A549 (cell line): ENCODE measurements at regions of chr17 and their contacts with region 1.

Region 1: GRCh38 chr17:28252436-28252835 is 66.6 kb upstream of the TMEM97 start:
- DNase-seq: no peak
- ATAC-seq: no peak
- H3K4me3 ChIP-seq: no peak overlapping the region
- H3K27ac ChIP-seq: 0 out of 6 replicates have a peak overlapping the region, but pooled peaks of 1 of the 2 experiments have one; percentile 16
- H3K4me1 ChIP-seq: peaks cover 15% of the 10 kb centered on the region
- CTCF ChIP-seq: no peak
- EP300 ChIP-seq: no peak
- POLR2A ChIP-seq: no peak
- RAD21 ChIP-seq: no peak

Region 2: GRCh38 chr17:28227316-28228125 is 24.9 kb before region 1 on chr17:
- CTCF ChIA-PET with region 1: interaction called, 338 read pairs
- POLR2A ChIA-PET with region 1: no interaction called
- DNase-seq: peak; percentile 93 to 94
- ATAC-seq: peak; percentile 88 to 95
- H3K4me3 ChIP-seq: peak overlapping the region; percentile 58
- H3K27ac ChIP-seq: peak overlapping the region; percentile 83 to 84
- H3K4me1 ChIP-seq: peaks cover 14% of the 10 kb centered on the region; the same call in 2 of the 3 replicates
- CTCF ChIP-seq: no peak
- EP300 ChIP-seq: no peak
- POLR2A ChIP-seq: peak; percentile 68
- RAD21 ChIP-seq: no peak; a peak in 1 of 5 replicates

Region 3: GRCh38 chr17:28280826-28281225 is 28.4 kb after region 1 on chr17:
- CTCF ChIA-PET with region 1: interaction called, 28 read pairs
- POLR2A ChIA-PET with region 1: no interaction called
- DNase-seq: no peak
- ATAC-seq: no peak
- H3K4me3 ChIP-seq: no peak overlapping the region
- H3K27ac ChIP-seq: peak overlapping the region in 1 of 2 experiments; percentile 63; a peak in 4 of 6 replicates
- H3K4me1 ChIP-seq: peaks cover 20% of the 10 kb centered on the region
- CTCF ChIP-seq: no peak
- EP300 ChIP-seq: no peak
- POLR2A ChIP-seq: no peak
- RAD21 ChIP-seq: no peak

Region 4: GRCh38 chr17:28318759-28319660 is 66.6 kb after region 1 on chr17 and contains the start of gene TMEM97:
- CTCF ChIA-PET with region 1: interaction called, 27 read pairs
- POLR2A ChIA-PET with region 1: interaction called, 6 read pairs
- DNase-seq: peak; percentile 98
- ATAC-seq: peak; percentile 97 to 99
- H3K4me3 ChIP-seq: peak within 1 kb of the TSS; percentile 73
- H3K27ac ChIP-seq: peak within 1 kb of the TSS; percentile 76 to 88
- H3K4me1 ChIP-seq: peaks cover 45% of the 10 kb centered on the region
- CTCF ChIP-seq: no peak
- EP300 ChIP-seq: no peak
- POLR2A ChIP-seq: peak; percentile 80
- RAD21 ChIP-seq: no peak; a peak in 3 of 5 replicates
- polyA plus RNA-seq, gene TMEM97: 90.9 and 98.7 TPM in 2 replicates

Region 5: DNA sequence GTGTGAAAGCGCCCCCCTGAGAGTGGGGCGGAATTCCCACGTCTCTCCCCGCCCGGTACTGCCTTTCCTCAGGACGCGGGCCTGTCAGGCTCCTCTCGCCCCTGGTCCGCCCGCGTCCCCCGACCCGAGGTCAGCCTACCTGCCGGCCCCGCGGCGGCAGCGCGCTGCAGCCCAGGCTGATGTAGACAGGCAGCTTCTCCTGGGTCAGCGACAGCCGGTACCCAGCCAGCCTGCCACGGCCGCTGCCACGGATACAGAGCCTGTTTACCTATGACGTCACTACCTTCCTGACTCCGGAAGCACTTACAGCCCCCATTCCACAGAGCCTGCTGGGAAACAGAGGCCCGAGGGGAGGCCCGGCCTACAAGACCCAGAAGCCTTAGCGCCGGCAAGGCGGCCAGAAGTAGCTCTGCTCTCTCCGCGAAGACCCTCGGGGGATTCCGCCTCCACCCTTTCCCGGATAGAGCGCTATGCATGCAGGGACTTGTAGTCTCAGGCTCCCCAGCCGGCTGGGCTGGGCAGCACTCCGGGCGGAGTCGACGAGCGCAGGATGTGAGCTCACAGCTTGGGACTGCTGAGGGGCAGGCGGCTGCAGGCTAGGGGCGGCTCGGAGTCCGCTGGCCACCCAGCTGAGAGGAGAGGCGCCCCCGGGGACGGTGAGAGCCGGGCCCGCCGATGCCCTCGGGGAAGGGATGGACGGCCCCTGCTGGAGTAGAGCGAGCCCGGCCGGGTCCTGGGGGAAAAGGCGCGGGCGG is 82.9 kb after region 1 on chr17 and contains the starts of genes IFT20 and TNFAIP1:
- CTCF ChIA-PET with region 1: interaction called, 18 read pairs
- POLR2A ChIA-PET with region 1: interaction called, 13 read pairs
- DNase-seq: peak; percentile 98 to 100
- ATAC-seq: peak; percentile 91 to 96
- H3K4me3 ChIP-seq: peak within 1 kb of the TSS; percentile 86
- H3K27ac ChIP-seq: peak within 1 kb of the TSS; percentile 87 to 92
- H3K4me1 ChIP-seq: peaks cover 31% of the 10 kb centered on the region
- CTCF ChIP-seq: no peak
- EP300 ChIP-seq: no peak
- POLR2A ChIP-seq: peak; percentile 90
- RAD21 ChIP-seq: no peak; a peak in 1 of 5 replicates
- polyA plus RNA-seq, gene IFT20: 58.7 and 72.1 TPM in 2 replicates
- polyA plus RNA-seq, gene TNFAIP1: 66.2 and 68.3 TPM in 2 replicates

Region 6: GRCh38 chr17:28446728-28447395 is 194.4 kb after region 1 on chr17:
- CTCF ChIA-PET with region 1: no interaction called
- POLR2A ChIA-PET with region 1: no interaction called
- DNase-seq: no peak
- ATAC-seq: no peak
- H3K4me3 ChIP-seq: no peak overlapping the region
- H3K27ac ChIP-seq: no peak overlapping the region
- H3K4me1 ChIP-seq: no peaks in the 10 kb centered on the region
- CTCF ChIP-seq: no peak
- EP300 ChIP-seq: no peak
- POLR2A ChIP-seq: no peak
- RAD21 ChIP-seq: no peak

Region 7: GRCh38 chr17:28532991-28533807 is 280.8 kb after region 1 on chr17:
- CTCF ChIA-PET with region 1: no interaction called
- POLR2A ChIA-PET with region 1: no interaction called
- DNase-seq: no peak
- ATAC-seq: no peak
- H3K4me3 ChIP-seq: no peak overlapping the region
- H3K27ac ChIP-seq: no peak overlapping the region
- H3K4me1 ChIP-seq: peaks cover 11% of the 10 kb centered on the region
- CTCF ChIP-seq: no peak
- EP300 ChIP-seq: no peak
- POLR2A ChIP-seq: no peak
- RAD21 ChIP-seq: no peak